Naive thymus-derived CD4-positive, alpha-beta T cell (primary cell): ENCODE measurements at regions of chr11 and their contacts with region 1.

Region 1: GRCh38 chr11:118359295-118359958 is at the start of gene UBE4A:
- DNase-seq: peak; percentile 89 to 96 (median 95)
- ATAC-seq: peak; percentile 96
- H3K4me3 ChIP-seq: peak within 1 kb of the TSS; percentile 87
- H3K4me3 Mint-ChIP-seq: peak within 1 kb of the TSS; percentile 92 to 99 (median 96)
- H3K27ac ChIP-seq: peak within 1 kb of the TSS; percentile 93
- H3K27ac Mint-ChIP-seq: peak within 1 kb of the TSS; percentile 96 to 100 (median 98)
- H3K4me1 ChIP-seq: peaks cover 18 to 27% of the 10 kb centered on the region in 2 donors
- H3K4me1 Mint-ChIP-seq: peaks cover 30 to 61% (median 51%) of the 10 kb centered on the region in 7 donors
- H3K27me3 ChIP-seq: no peaks in the 10 kb centered on the region
- H3K27me3 Mint-ChIP-seq: peaks cover 0 to 6% (median 0%) of the 10 kb centered on the region in 5 donors
- total RNA-seq, gene UBE4A: 38.4 to 54.5 (median 46.9) TPM

Region 2: GRCh38 chr11:118145285-118146227 is 213.9 kb before region 1 on chr11:
- CTCF ChIA-PET with region 1: no interaction called
- POLR2A ChIA-PET with region 1: no interaction called
- intact Hi-C with region 1: loop called (anchors 1 to 5 kb)
- DNase-seq: peak; percentile 76 to 93 (median 81)
- ATAC-seq: peak; percentile 95
- H3K4me3 ChIP-seq: peak overlapping the region; percentile 66
- H3K4me3 Mint-ChIP-seq: peak overlapping the region; percentile 43 to 88 (median 83)
- H3K27ac ChIP-seq: no peak overlapping the region
- H3K27ac Mint-ChIP-seq: peak overlapping the region in 1 of 9 donors; percentile 35
- H3K4me1 ChIP-seq: no peaks in the 10 kb centered on the region
- H3K4me1 Mint-ChIP-seq: peaks cover 0 to 20% (median 5%) of the 10 kb centered on the region in 7 donors
- H3K27me3 ChIP-seq: peaks cover 0 to 5% of the 10 kb centered on the region in 2 donors
- H3K27me3 Mint-ChIP-seq: peaks cover 45 to 78% (median 56%) of the 10 kb centered on the region in 5 donors

Region 3: DNA sequence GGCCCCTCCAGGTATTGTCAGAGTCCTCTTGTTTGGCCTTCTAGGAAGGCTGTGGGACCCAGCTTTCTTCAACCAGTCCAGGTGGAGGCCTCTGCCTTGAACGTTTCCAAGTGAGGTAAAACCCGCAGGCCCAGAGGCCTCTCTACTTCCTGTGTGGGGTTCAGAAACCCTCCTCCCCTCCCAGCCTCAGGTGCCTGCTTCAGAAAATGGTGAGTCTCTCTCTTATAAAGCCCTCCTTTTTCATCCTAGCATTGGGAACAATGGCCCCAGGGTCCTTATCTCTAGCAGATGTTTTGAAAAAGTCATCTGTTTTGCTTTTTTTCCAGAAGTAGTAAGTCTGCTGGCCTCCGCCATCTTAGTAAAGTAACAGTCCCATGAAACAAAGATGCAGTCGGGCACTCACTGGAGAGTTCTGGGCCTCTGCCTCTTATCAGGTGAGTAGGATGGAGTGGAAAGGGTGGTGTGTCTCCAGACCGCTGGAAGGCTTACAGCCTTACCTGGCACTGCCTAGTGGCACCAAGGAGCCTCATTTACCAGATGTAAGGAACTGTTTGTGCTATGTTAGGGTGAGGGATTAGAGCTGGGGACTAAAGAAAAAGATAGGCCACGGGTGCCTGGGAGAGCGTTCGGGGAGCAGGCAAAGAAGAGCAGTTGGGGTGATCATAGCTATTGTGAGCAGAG is 54.7 kb before region 1 on chr11 and contains the start of gene CD3E:
- CTCF ChIA-PET with region 1: interaction called, 90 read pairs
- POLR2A ChIA-PET with region 1: interaction called, 36 read pairs
- intact Hi-C with region 1: loop called (anchors 1 to 2 kb)
- DNase-seq: peak; percentile 31 to 83 (median 79)
- ATAC-seq: peak; percentile 83
- H3K4me3 ChIP-seq: peak within 1 kb of the TSS; percentile 88
- H3K4me3 Mint-ChIP-seq: peak within 1 kb of the TSS; percentile 95 to 100 (median 99)
- H3K27ac ChIP-seq: peak within 1 kb of the TSS; percentile 92
- H3K27ac Mint-ChIP-seq: peak within 1 kb of the TSS; percentile 97 to 100 (median 100)
- H3K4me1 ChIP-seq: peaks cover 41 to 62% of the 10 kb centered on the region in 2 donors
- H3K4me1 Mint-ChIP-seq: peaks cover 54 to 91% (median 78%) of the 10 kb centered on the region in 7 donors
- H3K27me3 ChIP-seq: no peaks in the 10 kb centered on the region
- H3K27me3 Mint-ChIP-seq: no peaks in the 10 kb centered on the region
- total RNA-seq, gene CD3E: 392 to 706 (median 670) TPM

Region 4: DNA sequence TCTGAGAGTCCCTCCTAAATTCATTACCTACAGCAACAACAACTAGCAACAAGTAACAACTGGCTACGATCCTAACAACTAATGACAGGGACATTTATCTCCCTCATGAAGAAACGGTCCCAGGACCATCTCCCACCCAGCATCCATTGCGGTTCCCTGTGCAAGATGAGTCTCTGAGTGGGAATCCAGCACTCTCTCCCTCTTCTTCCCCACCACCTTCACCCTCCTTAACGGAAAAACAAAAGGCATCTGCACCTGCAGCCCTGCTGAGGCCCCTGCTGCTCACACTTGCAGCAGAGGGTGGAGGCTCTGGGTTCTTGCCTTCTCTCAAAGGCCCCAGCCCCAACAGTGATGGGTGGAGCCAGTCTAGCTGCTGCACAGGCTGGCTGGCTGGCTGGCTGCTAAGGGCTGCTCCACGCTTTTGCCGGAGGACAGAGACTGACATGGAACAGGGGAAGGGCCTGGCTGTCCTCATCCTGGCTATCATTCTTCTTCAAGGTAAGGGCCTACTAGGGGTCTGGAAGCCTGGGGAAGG is 15.4 kb before region 1 on chr11 and contains the start of gene CD3G:
- CTCF ChIA-PET with region 1: interaction called, 11 read pairs
- POLR2A ChIA-PET with region 1: interaction called, 20 read pairs
- intact Hi-C with region 1: loop called (anchors 1 kb)
- DNase-seq: peak; percentile 39 to 83 (median 77)
- ATAC-seq: peak; percentile 88
- H3K4me3 ChIP-seq: peak within 1 kb of the TSS; percentile 88
- H3K4me3 Mint-ChIP-seq: peak within 1 kb of the TSS; percentile 89 to 98 (median 96)
- H3K27ac ChIP-seq: peak within 1 kb of the TSS; percentile 96
- H3K27ac Mint-ChIP-seq: peak within 1 kb of the TSS; percentile 84 to 100 (median 98)
- H3K4me1 ChIP-seq: peaks cover 22 to 35% of the 10 kb centered on the region in 2 donors
- H3K4me1 Mint-ChIP-seq: peaks cover 43 to 77% (median 65%) of the 10 kb centered on the region in 7 donors
- H3K27me3 ChIP-seq: no peaks in the 10 kb centered on the region
- H3K27me3 Mint-ChIP-seq: no peaks in the 10 kb centered on the region
- total RNA-seq, gene CD3G: 122 to 220 (median 192) TPM

Region 5: GRCh38 chr11:118488480-118489109 is 129.2 kb after region 1 on chr11:
- CTCF ChIA-PET with region 1: interaction called, 3 read pairs
- POLR2A ChIA-PET with region 1: interaction called, 3 read pairs
- intact Hi-C with region 1: loop called (anchors 1 kb)
- DNase-seq: peak; percentile 66 to 86 (median 80)
- ATAC-seq: peak; percentile 89
- H3K4me3 ChIP-seq: no peak overlapping the region
- H3K4me3 Mint-ChIP-seq: no peak overlapping the region
- H3K27ac ChIP-seq: peak overlapping the region; percentile 53
- H3K27ac Mint-ChIP-seq: peak overlapping the region in 7 of 9 donors; percentile 10 to 89 (median 57)
- H3K4me1 ChIP-seq: no peaks in the 10 kb centered on the region
- H3K4me1 Mint-ChIP-seq: peaks cover 0 to 12% (median 5%) of the 10 kb centered on the region in 7 donors
- H3K27me3 ChIP-seq: no peaks in the 10 kb centered on the region
- H3K27me3 Mint-ChIP-seq: no peaks in the 10 kb centered on the region

Region 6: GRCh38 chr11:118572061-118572980 is 212.9 kb after region 1 on chr11 and contains the start of gene ARCN1:
- CTCF ChIA-PET with region 1: no interaction called
- POLR2A ChIA-PET with region 1: interaction called, 3 read pairs
- intact Hi-C with region 1: loop called in 1 of 2 experiments (anchors 2 kb)
- DNase-seq: peak; percentile 58 to 82 (median 79)
- ATAC-seq: peak; percentile 94
- H3K4me3 ChIP-seq: peak within 1 kb of the TSS; percentile 98
- H3K4me3 Mint-ChIP-seq: peak within 1 kb of the TSS; percentile 83 to 99 (median 96)
- H3K27ac ChIP-seq: peak within 1 kb of the TSS; percentile 100
- H3K27ac Mint-ChIP-seq: peak within 1 kb of the TSS; percentile 92 to 98 (median 98)
- H3K4me1 ChIP-seq: peaks cover 26 to 36% of the 10 kb centered on the region in 2 donors
- H3K4me1 Mint-ChIP-seq: peaks cover 35 to 58% (median 50%) of the 10 kb centered on the region in 7 donors
- H3K27me3 ChIP-seq: no peaks in the 10 kb centered on the region
- H3K27me3 Mint-ChIP-seq: no peaks in the 10 kb centered on the region
- total RNA-seq, gene ARCN1: 71.2 to 134 (median 115) TPM